Natural killer cell (primary cell): ENCODE measurements at regions of chr15 and their contacts with region 1.

Region 1: GRCh38 chr15:70488002-70488605 is 275.3 kb downstream of the UACA start:
- DNase-seq: peak; percentile 75 to 87
- ATAC-seq: peak; percentile 17 to 46 (median 23)
- H3K4me3 ChIP-seq: no peak overlapping the region
- H3K4me3 Mint-ChIP-seq: peak overlapping the region; percentile 49
- H3K27ac ChIP-seq: no peak overlapping the region
- H3K27ac Mint-ChIP-seq: peak overlapping the region in 1 of 2 donors; percentile 86
- H3K4me1 ChIP-seq: peaks cover 65% of the 10 kb centered on the region
- H3K4me1 Mint-ChIP-seq: peaks cover 50 to 79% of the 10 kb centered on the region in 2 donors
- H3K27me3 ChIP-seq: peaks cover 23% of the 10 kb centered on the region
- H3K27me3 Mint-ChIP-seq: peaks cover 34 to 37% of the 10 kb centered on the region in 2 donors
- CTCF ChIP-seq: peak; percentile 88

Region 2: GRCh38 chr15:69576035-69576526 is 912.0 kb before region 1 on chr15:
- intact Hi-C with region 1: loop called (anchors 5 kb)
- DNase-seq: peak; percentile 61 to 84
- ATAC-seq: peak; percentile 78 to 94 (median 93)
- H3K4me3 ChIP-seq: no peak overlapping the region
- H3K4me3 Mint-ChIP-seq: no peak overlapping the region
- H3K27ac ChIP-seq: no peak overlapping the region
- H3K27ac Mint-ChIP-seq: no peak overlapping the region
- H3K4me1 ChIP-seq: peaks cover 24% of the 10 kb centered on the region
- H3K4me1 Mint-ChIP-seq: peaks cover 9 to 17% of the 10 kb centered on the region in 2 donors
- H3K27me3 ChIP-seq: no peaks in the 10 kb centered on the region
- H3K27me3 Mint-ChIP-seq: peaks cover 34 to 58% of the 10 kb centered on the region in 2 donors
- CTCF ChIP-seq: peak; percentile 69

Region 3: DNA sequence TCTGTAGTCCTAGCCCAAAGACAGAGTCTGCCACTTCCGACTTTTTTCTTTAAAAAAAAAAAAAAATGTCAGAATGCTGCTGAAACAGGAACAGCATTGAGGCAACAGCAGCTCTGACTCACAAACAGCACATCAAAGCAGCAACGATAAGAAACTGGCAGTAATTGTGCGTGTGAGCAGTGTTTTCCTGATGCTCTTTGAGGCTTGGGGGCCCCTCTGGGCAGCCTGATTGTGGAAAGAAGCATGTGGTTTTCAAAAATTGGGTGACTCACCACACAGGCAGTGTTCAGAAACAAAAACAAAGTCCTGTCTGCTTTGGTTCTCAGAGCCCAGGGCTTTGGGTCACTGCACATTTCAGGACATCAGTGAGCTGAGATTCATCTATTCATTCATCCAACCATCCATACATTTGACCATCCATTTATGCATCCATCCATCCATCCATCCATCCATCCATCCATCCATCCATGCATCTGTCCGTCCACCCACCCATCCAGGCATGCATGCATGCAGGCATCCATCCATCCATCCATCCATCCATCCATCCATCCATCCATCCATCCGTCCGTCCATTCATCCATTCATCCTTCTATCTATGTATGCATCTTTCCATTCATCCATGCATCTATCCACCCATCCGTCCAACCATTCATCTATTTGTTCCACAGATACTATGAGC is 727.1 kb before region 1 on chr15:
- intact Hi-C with region 1: loop called (anchors 1 kb)
- DNase-seq: peak; percentile 61 to 93
- ATAC-seq: peak; percentile 58 to 78 (median 67)
- H3K4me3 ChIP-seq: no peak overlapping the region
- H3K4me3 Mint-ChIP-seq: peak overlapping the region; percentile 22
- H3K27ac ChIP-seq: peak overlapping the region; percentile 39
- H3K27ac Mint-ChIP-seq: peak overlapping the region; percentile 82 to 84
- H3K4me1 ChIP-seq: peaks cover 55% of the 10 kb centered on the region
- H3K4me1 Mint-ChIP-seq: peaks cover 53 to 66% of the 10 kb centered on the region in 2 donors
- H3K27me3 ChIP-seq: no peaks in the 10 kb centered on the region
- H3K27me3 Mint-ChIP-seq: peaks cover 50 to 74% of the 10 kb centered on the region in 2 donors
- CTCF ChIP-seq: no peak

Region 4: DNA sequence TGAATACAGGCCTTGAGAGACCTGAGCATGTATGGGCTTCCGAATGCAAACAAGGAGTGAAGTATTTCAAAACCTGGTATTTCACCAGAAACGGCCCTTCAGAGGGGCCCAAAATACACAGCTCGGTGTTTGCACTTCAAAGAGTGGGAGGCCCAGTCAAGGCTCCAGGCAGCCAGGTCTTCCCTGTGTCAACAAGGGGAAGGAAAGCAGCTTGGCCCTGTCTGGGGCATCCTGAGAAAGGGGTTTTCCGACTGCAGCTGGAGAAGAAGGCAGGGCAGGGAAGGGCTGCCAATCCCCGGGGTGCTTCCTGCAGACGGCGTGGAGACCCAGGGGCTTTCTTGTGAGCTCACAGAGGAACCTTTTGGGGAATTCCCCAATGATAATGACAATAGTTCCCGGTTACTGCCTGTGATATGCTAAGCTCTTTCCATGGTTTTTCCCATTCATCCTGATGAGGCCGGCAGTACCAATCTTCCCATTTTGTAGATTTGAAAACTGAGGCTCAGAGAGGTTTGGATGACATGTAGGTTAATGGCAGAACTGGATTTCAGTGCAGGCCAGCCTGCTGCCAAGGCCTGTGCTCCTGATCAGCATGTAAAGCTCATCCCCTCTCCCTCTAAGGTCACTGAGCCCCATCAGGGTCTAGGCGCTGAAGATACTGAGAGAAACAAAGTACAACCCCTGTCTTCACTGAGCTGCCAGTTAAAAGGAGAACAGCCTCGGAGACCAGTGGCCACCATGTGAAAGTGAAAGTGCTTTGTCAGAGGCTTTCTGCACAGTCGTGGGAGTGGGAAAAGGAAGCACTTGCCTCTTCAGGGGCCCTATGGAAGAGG is 347.3 kb before region 1 on chr15:
- intact Hi-C with region 1: loop called (anchors 10 kb)
- DNase-seq: peak in 1 of 2 donors; percentile 77
- ATAC-seq: peak; percentile 55 to 66 (median 64)
- H3K4me3 ChIP-seq: no peak overlapping the region
- H3K4me3 Mint-ChIP-seq: peak overlapping the region; percentile 78
- H3K27ac ChIP-seq: no peak overlapping the region
- H3K27ac Mint-ChIP-seq: peak overlapping the region; percentile 54 to 66
- H3K4me1 ChIP-seq: peaks cover 28% of the 10 kb centered on the region
- H3K4me1 Mint-ChIP-seq: peaks cover 21 to 31% of the 10 kb centered on the region in 2 donors
- H3K27me3 ChIP-seq: peaks cover 8% of the 10 kb centered on the region
- H3K27me3 Mint-ChIP-seq: peaks cover 52 to 78% of the 10 kb centered on the region in 2 donors
- CTCF ChIP-seq: no peak

Region 5: DNA sequence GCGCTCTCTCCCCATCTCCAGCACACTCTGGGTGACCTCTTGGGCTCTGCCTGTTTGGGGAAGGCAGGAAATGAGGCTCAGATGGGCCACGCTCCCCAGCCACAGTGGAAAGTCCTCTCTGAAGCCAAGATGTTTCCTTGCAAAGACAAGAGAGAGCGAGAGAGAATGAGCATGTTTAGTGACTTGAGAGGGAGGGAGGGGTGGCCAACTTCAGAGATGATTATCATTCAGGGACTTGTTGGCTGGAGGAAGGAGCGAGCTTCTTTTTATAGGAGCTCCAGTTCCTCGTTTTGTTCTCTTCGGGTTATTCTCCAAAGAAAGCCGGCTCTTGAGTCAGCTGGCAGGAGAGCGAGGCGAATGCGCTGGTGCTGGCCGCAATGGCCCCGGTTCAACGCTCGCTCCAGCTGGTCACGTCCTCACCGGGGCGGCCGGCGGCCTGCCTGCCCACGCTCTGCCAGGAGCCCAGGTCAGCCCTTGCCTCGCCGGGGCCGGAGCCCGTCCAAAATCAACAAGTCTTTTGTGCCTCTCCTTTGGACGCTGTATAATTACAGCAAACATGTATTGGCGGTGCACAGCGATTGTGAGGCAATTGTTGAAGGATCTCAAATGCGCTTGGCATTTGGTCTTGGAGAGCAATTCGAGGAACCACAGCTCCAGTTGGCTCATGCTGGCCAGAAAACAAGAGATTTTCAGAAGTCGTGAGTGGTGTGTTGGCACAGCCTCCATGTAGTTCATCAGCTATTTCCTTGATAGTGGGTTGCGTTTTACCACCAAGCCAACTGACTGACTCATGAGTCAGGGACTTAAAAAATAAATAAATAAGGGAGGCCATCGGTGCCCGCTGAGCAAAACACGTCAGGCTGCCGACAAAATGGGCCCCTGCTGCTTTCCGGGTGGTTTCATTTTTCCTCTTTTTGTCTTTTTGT is 13.4 kb before region 1 on chr15:
- intact Hi-C with region 1: loop called (anchors 1 kb)
- DNase-seq: peak; percentile 48 to 64
- ATAC-seq: peak; percentile 84 to 88 (median 86)
- H3K4me3 ChIP-seq: peak overlapping the region; percentile 10
- H3K4me3 Mint-ChIP-seq: peak overlapping the region; percentile 84
- H3K27ac ChIP-seq: peak overlapping the region; percentile 8
- H3K27ac Mint-ChIP-seq: peak overlapping the region; percentile 77 to 83
- H3K4me1 ChIP-seq: peaks cover 42% of the 10 kb centered on the region
- H3K4me1 Mint-ChIP-seq: peaks cover 22 to 41% of the 10 kb centered on the region in 2 donors
- H3K27me3 ChIP-seq: peaks cover 14% of the 10 kb centered on the region
- H3K27me3 Mint-ChIP-seq: peaks cover 37 to 62% of the 10 kb centered on the region in 2 donors
- CTCF ChIP-seq: no peak

Region 6: GRCh38 chr15:70559265-70560239 is 71.4 kb after region 1 on chr15:
- intact Hi-C with region 1: no loop called
- DNase-seq: peak; percentile 31 to 84
- ATAC-seq: peak; percentile 78 to 96 (median 88)
- H3K4me3 ChIP-seq: no peak overlapping the region
- H3K4me3 Mint-ChIP-seq: no peak overlapping the region
- H3K27ac ChIP-seq: no peak overlapping the region
- H3K27ac Mint-ChIP-seq: no peak overlapping the region
- H3K4me1 ChIP-seq: peaks cover 20% of the 10 kb centered on the region
- H3K4me1 Mint-ChIP-seq: no peaks in the 10 kb centered on the region
- H3K27me3 ChIP-seq: peaks cover 8% of the 10 kb centered on the region
- H3K27me3 Mint-ChIP-seq: peaks cover 15 to 28% of the 10 kb centered on the region in 2 donors
- CTCF ChIP-seq: no peak